ENCODE measurements at regions of chr2 and their contacts with region 1.

Region 1: GRCh38 chr2:197705121-197705911 is at the start of gene MARS2:
- DNase-seq: peak; percentile 92
- H3K4me3 Mint-ChIP-seq: peak within 1 kb of the TSS; percentile 72
- H3K27ac Mint-ChIP-seq: peak within 1 kb of the TSS; percentile 80
- H3K4me1 Mint-ChIP-seq: peaks cover 37% of the 10 kb centered on the region
- H3K27me3 Mint-ChIP-seq: no peaks in the 10 kb centered on the region
- total RNA-seq, gene MARS2: 7.5 to 8.8 TPM

Region 2: GRCh38 chr2:197191177-197191939 is 514.0 kb before region 1 on chr2:
- CTCF ChIA-PET with region 1: no interaction called
- intact Hi-C with region 1: loop called (anchors 10 kb)
- DNase-seq: no peak
- H3K4me3 Mint-ChIP-seq: peak overlapping the region; percentile 19
- H3K27ac Mint-ChIP-seq: peak overlapping the region; percentile 85
- H3K4me1 Mint-ChIP-seq: peaks cover 74% of the 10 kb centered on the region
- H3K27me3 Mint-ChIP-seq: no peaks in the 10 kb centered on the region

Region 3: GRCh38 chr2:197216361-197216979 is 488.8 kb before region 1 on chr2:
- CTCF ChIA-PET with region 1: no interaction called
- intact Hi-C with region 1: no loop called
- DNase-seq: no peak
- H3K4me3 Mint-ChIP-seq: peak overlapping the region; percentile 69
- H3K27ac Mint-ChIP-seq: peak overlapping the region; percentile 97
- H3K4me1 Mint-ChIP-seq: peaks cover 94% of the 10 kb centered on the region
- H3K27me3 Mint-ChIP-seq: no peaks in the 10 kb centered on the region

Region 4: DNA sequence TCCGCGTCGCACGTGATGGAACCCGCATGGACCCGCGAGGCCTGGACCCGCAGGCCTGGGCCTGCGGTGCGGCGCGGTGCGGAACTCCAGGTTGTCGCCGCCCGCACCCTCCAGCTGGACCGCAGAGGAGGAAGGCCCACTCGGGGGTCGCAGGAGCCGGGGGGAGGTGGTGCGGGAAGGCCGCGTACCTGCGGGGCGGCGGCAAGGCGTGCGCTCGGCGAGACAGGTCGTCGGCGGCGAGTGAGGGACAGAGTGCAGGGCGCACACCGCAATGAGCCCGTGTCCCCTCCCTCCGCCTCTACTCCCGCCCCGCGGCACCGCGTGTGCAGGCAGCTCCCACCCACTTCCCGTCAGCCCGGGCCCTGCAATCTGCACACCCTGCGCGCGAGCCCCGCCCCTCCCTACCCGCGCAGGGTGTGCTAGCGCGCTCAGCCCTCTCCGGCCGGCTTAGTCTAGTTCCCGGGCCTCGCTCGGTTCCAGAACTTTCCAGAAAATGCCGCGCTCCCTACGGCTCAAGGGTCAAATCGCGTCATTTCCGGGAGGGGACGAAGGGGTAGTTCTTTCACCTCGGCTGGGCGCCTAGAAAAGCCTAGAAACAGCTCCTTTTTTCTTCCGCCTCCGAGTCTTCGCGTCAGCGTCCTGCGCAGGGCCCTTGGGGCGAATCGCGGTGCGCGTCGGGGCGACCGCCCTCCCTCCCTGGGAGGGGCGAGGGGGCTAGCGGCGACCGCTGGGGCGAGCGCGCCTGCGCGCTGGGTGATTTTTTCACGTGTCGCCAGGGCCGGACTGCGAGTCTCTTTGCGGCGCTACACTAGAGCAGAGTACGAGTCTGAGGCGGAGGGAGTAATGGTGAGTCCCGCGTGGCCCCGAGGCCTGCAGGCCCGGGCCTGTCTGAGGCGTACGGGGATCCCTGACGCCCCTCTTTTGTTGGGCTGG is 205.5 kb before region 1 on chr2 and contains the starts of genes HSPD1 and HSPE1:
- CTCF ChIA-PET with region 1: no interaction called
- intact Hi-C with region 1: loop called (anchors 1 kb)
- DNase-seq: peak; percentile 99
- H3K4me3 Mint-ChIP-seq: peak within 1 kb of the TSS; percentile 92
- H3K27ac Mint-ChIP-seq: peak within 1 kb of the TSS; percentile 98
- H3K4me1 Mint-ChIP-seq: peaks cover 51% of the 10 kb centered on the region
- H3K27me3 Mint-ChIP-seq: no peaks in the 10 kb centered on the region
- total RNA-seq, gene HSPD1: 1,191 to 1,210 TPM
- total RNA-seq, gene HSPE1: 294 to 310 TPM

Region 5: GRCh38 chr2:197538412-197538811 is 166.9 kb before region 1 on chr2:
- CTCF ChIA-PET with region 1: no interaction called
- intact Hi-C with region 1: no loop called
- DNase-seq: no peak
- H3K4me3 Mint-ChIP-seq: no peak overlapping the region
- H3K27ac Mint-ChIP-seq: peak overlapping the region; percentile 24
- H3K4me1 Mint-ChIP-seq: peaks cover 36% of the 10 kb centered on the region
- H3K27me3 Mint-ChIP-seq: no peaks in the 10 kb centered on the region

Region 6: GRCh38 chr2:197596766-197597165 is 108.5 kb before region 1 on chr2:
- CTCF ChIA-PET with region 1: no interaction called
- intact Hi-C with region 1: no loop called
- DNase-seq: no peak
- H3K4me3 Mint-ChIP-seq: no peak overlapping the region
- H3K27ac Mint-ChIP-seq: no peak overlapping the region
- H3K4me1 Mint-ChIP-seq: peaks cover 5% of the 10 kb centered on the region
- H3K27me3 Mint-ChIP-seq: peaks cover 4% of the 10 kb centered on the region

Region 7: DNA sequence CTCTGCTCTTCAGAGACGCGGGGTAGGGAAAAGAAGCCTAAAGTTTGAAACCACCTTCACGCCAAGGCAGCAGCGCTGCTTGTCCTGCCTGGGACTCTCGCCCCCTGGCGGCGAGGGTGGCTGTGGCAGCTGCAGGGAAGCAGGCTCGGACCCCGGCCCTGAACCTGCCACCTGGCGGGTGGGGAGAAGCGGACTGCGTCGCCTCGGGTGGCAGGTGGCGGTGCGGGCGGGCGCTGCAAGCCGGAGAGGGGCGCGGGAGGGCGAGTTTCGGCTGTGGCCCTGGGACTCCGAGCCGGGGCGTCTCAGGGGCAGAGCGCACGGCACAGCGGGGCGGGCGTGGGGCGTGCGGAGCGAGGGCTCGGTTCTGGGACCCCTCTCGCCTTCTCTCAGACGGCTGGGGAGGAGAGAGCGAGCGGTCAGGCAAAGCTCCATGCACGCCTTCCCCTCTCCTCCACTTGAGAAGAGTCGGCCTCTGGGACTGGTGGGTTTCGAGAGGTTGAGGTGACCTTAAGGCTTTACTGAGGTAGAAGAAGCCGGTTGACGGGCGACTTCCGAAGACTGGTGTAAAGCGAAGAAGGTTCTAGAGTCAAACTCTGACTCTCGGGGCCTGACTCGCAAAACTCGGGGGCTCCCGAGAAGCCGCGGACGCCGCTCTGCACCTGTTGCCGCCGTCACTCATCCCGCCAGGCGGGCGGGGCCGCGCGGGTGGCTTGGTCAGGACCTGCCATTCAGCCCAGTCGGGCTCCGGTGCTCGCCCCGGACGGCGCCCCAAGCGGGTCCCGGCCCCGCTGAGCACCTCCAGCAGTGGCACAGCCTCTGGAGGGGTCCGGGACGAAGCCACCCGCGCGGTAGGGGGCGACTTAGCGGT is 80.9 kb after region 1 on chr2:
- CTCF ChIA-PET with region 1: interaction called, 3 read pairs
- intact Hi-C with region 1: loop called (anchors 1 kb)
- DNase-seq: peak; percentile 70
- H3K4me3 Mint-ChIP-seq: peak overlapping the region; percentile 67
- H3K27ac Mint-ChIP-seq: no peak overlapping the region
- H3K4me1 Mint-ChIP-seq: peaks cover 2% of the 10 kb centered on the region
- H3K27me3 Mint-ChIP-seq: peaks cover 9% of the 10 kb centered on the region

Region 8: DNA sequence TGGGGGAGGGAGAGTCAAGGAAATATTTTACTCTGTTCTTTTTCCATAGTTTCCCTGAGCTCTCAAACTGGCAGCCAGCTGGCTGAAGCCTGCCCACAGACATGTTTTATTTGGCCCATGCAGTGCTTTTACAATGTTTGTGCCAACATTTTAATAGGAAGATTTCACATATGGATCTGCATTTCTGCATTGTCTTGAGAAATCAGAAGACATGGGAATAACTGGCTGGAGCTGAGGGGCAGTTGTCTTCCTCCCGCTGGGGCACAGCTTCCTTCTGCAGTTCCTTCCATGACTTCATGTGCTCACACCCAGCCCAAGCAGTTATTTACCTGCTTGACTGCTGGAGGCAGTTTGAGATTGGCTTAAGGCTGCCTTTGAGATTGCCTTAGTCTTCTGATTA is 173.5 kb after region 1 on chr2:
- CTCF ChIA-PET with region 1: no interaction called
- intact Hi-C with region 1: no loop called
- DNase-seq: no peak
- H3K4me3 Mint-ChIP-seq: no peak overlapping the region
- H3K27ac Mint-ChIP-seq: no peak overlapping the region
- H3K4me1 Mint-ChIP-seq: peaks cover 55% of the 10 kb centered on the region
- H3K27me3 Mint-ChIP-seq: no peaks in the 10 kb centered on the region

Region 9: GRCh38 chr2:197931661-197932312 is 226.5 kb after region 1 on chr2:
- CTCF ChIA-PET with region 1: no interaction called
- intact Hi-C with region 1: loop called (anchors 10 kb)
- DNase-seq: no peak
- H3K4me3 Mint-ChIP-seq: no peak overlapping the region
- H3K27ac Mint-ChIP-seq: no peak overlapping the region
- H3K4me1 Mint-ChIP-seq: peaks cover 59% of the 10 kb centered on the region
- H3K27me3 Mint-ChIP-seq: no peaks in the 10 kb centered on the region

Region 10: DNA sequence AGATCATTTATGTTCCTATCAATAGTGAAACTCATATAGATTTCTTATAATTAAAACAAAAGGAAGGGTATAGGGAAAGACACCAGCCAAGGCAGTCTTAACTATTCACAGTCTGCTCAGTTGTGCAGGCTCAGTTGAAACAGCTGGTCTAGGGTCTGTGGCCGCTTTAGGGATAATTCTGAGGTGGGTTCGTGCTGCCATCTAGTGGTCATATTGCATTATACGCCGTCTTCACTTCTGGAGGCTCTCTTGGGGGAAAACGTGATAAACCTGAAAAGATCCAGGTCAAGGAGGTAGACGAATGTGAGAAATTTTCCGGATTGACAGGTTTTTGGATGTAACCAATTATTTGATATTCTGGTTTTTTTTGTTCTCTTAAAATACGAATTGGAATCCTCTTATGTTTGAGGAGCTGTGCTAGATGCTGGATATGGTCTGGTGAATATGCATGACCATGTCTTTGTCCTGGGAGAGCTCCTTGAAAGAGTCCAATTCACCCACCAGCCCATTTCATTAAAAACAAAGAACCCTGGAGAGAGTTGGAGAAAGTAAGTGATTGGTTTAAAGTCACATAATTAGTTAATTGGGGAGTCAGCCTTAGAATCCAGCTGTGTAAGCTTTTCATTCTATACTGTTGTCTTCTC is 591.5 kb after region 1 on chr2:
- CTCF ChIA-PET with region 1: no interaction called
- intact Hi-C with region 1: loop called (anchors 1 kb)
- DNase-seq: peak; percentile 73
- H3K4me3 Mint-ChIP-seq: no peak overlapping the region
- H3K27ac Mint-ChIP-seq: no peak overlapping the region
- H3K4me1 Mint-ChIP-seq: no peaks in the 10 kb centered on the region
- H3K27me3 Mint-ChIP-seq: peaks cover 7% of the 10 kb centered on the region